A549 (cell line): ENCODE measurements at regions of chr15 and their contacts with region 1.

Region 1: DNA sequence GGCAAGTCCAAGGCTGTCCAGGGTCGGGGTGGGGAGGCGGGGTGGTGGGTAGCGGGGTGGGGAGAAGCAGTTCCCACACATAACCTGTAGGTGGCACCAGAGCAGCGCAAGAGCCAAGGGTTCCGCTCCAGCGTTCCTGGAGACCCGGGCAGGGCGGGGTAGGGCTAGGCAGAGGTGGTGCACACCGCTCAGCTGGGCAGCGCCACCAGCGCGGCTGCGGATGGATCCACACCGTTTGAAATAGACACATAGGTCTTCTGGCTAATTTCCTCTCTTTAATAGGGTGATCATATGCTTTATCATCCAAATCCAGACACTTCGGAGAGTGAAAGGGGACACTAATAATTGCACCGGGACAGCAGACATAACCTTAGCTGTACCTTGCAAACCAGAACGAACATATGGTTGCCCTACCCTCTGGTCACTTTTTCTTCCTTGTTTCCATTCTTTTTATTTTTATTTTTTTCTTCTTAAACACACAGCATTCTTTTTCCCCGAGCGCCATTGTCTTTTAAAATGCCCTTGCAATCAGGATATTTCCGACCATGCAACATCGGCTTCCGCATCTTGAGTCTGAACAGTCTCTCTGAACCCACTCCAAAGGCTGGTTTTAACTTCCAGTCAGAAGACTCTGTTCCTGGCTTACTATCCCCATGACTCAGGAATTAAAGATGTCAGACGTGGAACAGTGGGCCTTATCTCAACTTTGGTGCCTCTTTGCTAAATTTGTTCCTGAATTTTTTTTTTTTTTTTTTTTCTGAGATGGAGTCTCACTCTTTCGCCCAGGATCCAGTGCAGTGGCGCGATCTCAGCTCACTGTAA is 12.5 kb upstream of the ZSCAN2 start:
- DNase-seq: peak; percentile 93 to 98
- ATAC-seq: peak; percentile 99 to 100
- H3K4me3 ChIP-seq: peak overlapping the region; percentile 33
- H3K27ac ChIP-seq: peak overlapping the region; percentile 66 to 82
- H3K4me1 ChIP-seq: peaks cover 9% of the 10 kb centered on the region; the same call in 2 of the 3 replicates
- CTCF ChIP-seq: peak; percentile 97
- EP300 ChIP-seq: no peak
- POLR2A ChIP-seq: no peak
- RAD21 ChIP-seq: peak; percentile 90 to 99

Region 2: DNA sequence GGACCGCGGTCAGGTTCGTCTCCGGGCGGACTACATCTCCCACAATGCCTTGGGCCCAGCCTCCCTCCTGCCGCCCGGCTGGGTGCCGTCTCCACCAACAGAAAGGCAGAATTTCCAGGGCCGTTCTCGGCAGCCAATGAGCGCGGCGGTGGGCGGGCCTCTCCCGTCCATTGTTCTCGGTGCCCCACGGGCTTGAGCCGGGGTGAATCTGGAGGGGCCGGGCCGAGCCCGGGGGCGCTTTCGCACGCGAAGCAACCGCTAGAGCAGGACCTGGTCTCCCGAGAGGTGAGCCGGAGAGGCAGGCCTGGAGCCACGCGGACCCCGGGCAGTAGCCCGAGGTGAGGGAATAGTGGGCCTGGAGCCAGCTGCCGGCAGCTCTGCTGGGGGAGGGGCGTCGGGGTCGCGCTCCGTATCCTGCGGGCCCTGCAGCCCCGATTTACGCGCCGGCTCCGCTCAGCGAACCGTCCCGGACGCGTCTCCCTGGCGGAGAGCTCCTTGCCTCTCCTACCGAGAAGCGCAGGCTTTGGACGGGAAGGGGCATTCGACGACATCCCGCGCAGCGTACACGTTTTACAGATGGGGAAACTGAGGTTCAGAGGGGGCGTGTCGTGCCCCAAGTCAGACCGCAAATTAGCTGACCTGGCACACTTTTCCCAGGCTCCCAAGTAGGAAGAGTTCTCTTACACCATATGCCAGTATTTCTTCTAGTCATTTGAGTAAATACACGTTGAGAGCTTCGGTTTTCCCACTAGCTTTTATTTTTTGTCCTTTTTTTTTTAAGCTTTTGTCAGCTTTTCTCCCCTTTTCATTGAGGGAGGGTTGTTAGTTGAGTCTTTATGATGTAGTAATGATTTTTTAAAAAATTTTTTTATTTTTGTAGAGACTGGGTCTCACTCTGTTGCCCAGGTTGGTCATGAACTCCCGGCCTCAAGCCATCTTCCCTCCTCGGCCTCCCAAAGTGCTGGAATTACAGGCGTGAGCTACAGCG is 12.9 kb after region 1 on chr15 and contains the start of gene ZSCAN2:
- CTCF ChIA-PET with region 1: interaction called, 57 read pairs
- POLR2A ChIA-PET with region 1: interaction called, 8 read pairs
- DNase-seq: peak; percentile 95 to 99
- ATAC-seq: peak; percentile 97 to 98
- H3K4me3 ChIP-seq: peak within 1 kb of the TSS; percentile 72
- H3K27ac ChIP-seq: peak within 1 kb of the TSS; percentile 78 to 88
- H3K4me1 ChIP-seq: peaks cover 27% of the 10 kb centered on the region
- CTCF ChIP-seq: no peak
- EP300 ChIP-seq: no peak
- POLR2A ChIP-seq: peak; percentile 36
- RAD21 ChIP-seq: no peak
- polyA plus RNA-seq, gene ZSCAN2: 16.2 and 16.5 TPM in 2 replicates

Region 3: DNA sequence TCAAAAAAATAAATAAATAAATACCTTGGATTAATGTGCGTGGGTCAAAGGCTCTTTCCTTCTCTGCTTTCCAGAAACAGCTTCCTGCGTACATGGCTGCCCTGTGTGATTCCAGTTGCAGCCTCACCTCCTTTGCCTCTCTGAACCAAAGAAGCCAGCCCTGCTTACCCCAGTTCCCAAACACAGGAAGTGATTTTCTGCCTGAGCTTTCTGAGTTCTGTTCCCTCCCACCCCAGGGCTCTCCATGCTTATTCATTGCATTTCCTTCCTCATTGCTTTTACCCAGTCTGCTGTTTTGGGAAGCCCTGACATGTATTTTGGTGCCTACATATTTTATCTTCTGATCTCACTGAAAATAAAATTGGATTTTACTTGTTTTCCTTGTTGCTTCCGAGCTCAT is 28.0 kb after region 1 on chr15:
- CTCF ChIA-PET with region 1: interaction called, 19 read pairs
- POLR2A ChIA-PET with region 1: no interaction called
- DNase-seq: no peak
- ATAC-seq: no peak
- H3K4me3 ChIP-seq: no peak overlapping the region
- H3K27ac ChIP-seq: no peak overlapping the region
- H3K4me1 ChIP-seq: no peaks in the 10 kb centered on the region
- CTCF ChIP-seq: no peak
- EP300 ChIP-seq: no peak
- POLR2A ChIP-seq: no peak
- RAD21 ChIP-seq: no peak

Region 4: GRCh38 chr15:84633311-84634227 is 45.3 kb after region 1 on chr15:
- CTCF ChIA-PET with region 1: interaction called, 21 read pairs
- POLR2A ChIA-PET with region 1: interaction called, 8 read pairs
- DNase-seq: peak in 1 of 2 experiments; percentile 78
- ATAC-seq: peak; percentile 72 to 77
- H3K4me3 ChIP-seq: peak overlapping the region; percentile 51
- H3K27ac ChIP-seq: peak overlapping the region; percentile 63 to 87
- H3K4me1 ChIP-seq: peaks cover 24% of the 10 kb centered on the region; the same call in 2 of the 3 replicates
- CTCF ChIP-seq: peak; percentile 31; the same call in 2 of the 3 replicates
- EP300 ChIP-seq: no peak
- POLR2A ChIP-seq: peak; percentile 35
- RAD21 ChIP-seq: no peak; a peak in 2 of 5 replicates

Region 5: DNA sequence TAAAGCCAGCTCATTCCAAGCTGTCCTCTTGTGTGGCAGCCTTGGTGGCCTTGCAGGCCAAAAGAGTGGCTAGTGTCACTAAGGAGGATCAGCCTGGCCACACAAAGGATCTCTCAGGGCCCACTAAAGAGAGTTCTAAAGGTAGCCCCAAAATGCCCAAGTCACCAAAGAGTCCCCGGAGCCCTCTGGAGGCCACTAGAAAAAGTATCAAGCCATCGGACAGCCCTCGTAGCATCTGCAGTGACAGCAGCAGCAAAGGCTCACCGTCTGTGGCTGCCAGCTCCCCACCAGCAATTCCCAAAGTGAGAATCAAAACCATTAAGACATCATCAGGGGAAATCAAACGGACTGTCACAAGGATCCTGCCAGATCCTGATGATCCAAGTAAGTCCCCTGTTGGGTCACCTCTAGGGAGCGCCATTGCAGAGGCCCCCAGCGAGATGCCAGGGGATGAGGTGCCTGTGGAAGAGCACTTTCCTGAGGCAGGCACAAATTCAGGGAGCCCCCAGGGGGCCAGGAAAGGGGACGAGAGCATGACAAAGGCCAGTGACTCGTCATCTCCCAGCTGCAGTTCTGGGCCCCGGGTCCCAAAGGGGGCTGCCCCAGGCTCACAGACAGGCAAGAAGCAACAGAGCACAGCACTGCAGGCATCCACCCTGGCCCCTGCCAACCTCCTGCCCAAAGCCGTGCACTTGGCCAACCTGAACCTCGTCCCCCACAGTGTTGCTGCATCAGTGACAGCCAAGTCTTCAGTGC is 195.4 kb after region 1 on chr15:
- CTCF ChIA-PET with region 1: no interaction called
- POLR2A ChIA-PET with region 1: no interaction called
- DNase-seq: no peak
- ATAC-seq: peak in 1 of 2 experiments; percentile 24; a peak in 2 of 6 replicates
- H3K4me3 ChIP-seq: no peak overlapping the region
- H3K27ac ChIP-seq: no peak overlapping the region
- H3K4me1 ChIP-seq: no peaks in the 10 kb centered on the region
- CTCF ChIP-seq: no peak; the same call in 2 of the 3 replicates
- EP300 ChIP-seq: no peak
- POLR2A ChIP-seq: no peak
- RAD21 ChIP-seq: peak in 1 of 2 experiments; percentile 6; a peak in 1 of 5 replicates

Region 6: GRCh38 chr15:85168642-85169173 is 580.4 kb after region 1 on chr15:
- CTCF ChIA-PET with region 1: interaction called, 19 read pairs
- POLR2A ChIA-PET with region 1: no interaction called
- DNase-seq: peak; percentile 73 to 75
- ATAC-seq: peak; percentile 85 to 90
- H3K4me3 ChIP-seq: peak overlapping the region; percentile 51
- H3K27ac ChIP-seq: peak overlapping the region; percentile 63 to 73
- H3K4me1 ChIP-seq: peaks cover 5% of the 10 kb centered on the region; the same call in 2 of the 3 replicates
- CTCF ChIP-seq: peak; percentile 84
- EP300 ChIP-seq: no peak
- POLR2A ChIP-seq: no peak
- RAD21 ChIP-seq: peak; percentile 72 to 82